IMR-90 (cell line): ENCODE measurements at regions of chr13 and their contacts with region 1.

Region 1: DNA sequence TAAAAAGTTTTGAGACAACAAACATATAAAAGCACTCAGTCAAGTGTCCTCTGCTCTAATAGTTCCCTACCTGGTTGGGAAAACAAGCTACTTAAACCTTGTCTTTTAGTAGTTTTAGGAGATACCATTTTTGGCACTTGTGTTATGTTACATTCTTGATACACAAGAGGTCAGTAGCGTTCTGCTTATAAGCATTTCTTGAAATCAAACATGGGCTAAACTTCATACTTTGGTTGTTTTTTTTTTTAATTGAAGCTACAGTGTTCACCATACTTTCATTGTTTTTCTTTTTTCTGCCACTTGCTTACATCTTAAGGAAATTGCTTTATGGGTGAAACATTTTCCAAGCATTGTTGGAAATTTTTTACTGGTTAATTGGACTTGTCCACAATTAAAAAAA is 12.9 kb downstream of the NHLRC3 start:
- DNase-seq: peak; percentile 50
- ATAC-seq: peak; percentile 75
- H3K4me3 ChIP-seq: no peak overlapping the region
- H3K27ac ChIP-seq: no peak overlapping the region
- H3K4me1 ChIP-seq: no peaks in the 10 kb centered on the region
- H3K27me3 ChIP-seq: no peaks in the 10 kb centered on the region
- CTCF ChIP-seq: peak; percentile 55
- POLR2A ChIP-seq: no peak
- RAD21 ChIP-seq: peak; percentile 60

Region 2: DNA sequence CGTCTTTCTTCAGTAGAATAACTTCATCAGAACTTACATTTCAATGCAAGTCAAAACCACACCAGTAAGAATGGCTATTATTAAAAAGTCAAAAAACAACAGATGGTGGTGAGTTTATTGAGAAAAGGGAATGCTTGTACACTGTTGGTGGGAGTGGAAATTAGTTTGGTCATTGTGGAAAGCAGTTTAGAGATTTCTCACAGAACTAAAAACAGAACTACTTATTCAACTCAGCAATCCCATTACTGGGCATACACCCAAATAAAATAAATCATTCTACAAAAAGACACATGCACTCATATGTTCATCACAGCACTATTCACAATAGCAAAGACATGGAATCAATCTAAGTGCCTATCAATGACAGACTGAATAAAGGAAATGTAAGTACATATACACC is 218.3 kb after region 1 on chr13:
- CTCF ChIA-PET with region 1: no interaction called
- POLR2A ChIA-PET with region 1: no interaction called
- dilution Hi-C with region 1: no loop called
- in situ Hi-C with region 1: no loop called
- intact Hi-C with region 1: loop called (anchors 5 kb)
- DNase-seq: no peak
- ATAC-seq: no peak
- H3K4me3 ChIP-seq: no peak overlapping the region
- H3K27ac ChIP-seq: no peak overlapping the region
- H3K4me1 ChIP-seq: no peaks in the 10 kb centered on the region
- H3K27me3 ChIP-seq: no peaks in the 10 kb centered on the region; the same call in 1 of the 2 replicates
- CTCF ChIP-seq: no peak
- POLR2A ChIP-seq: no peak
- RAD21 ChIP-seq: no peak

Region 3: DNA sequence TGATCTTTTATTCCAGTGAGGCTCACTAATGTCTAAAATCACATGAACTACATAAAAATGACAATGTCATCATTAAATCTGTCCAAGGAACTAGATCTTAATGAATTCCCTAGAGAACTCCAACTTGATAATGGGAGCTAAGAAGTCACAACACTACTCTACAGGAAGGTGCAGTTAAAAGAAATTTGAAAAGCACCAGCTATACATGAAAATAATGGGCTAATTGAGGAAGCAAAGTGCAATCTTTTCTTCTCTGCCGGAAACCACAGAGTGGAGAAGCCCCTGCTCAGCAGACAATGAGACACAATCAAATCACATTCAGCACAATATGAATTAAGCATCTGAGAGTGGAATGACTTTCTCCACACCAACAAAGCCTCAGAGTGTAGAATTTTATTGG is 290.1 kb after region 1 on chr13:
- CTCF ChIA-PET with region 1: no interaction called
- POLR2A ChIA-PET with region 1: no interaction called
- dilution Hi-C with region 1: no loop called
- in situ Hi-C with region 1: no loop called
- intact Hi-C with region 1: no loop called
- DNase-seq: no peak
- ATAC-seq: no peak
- H3K4me3 ChIP-seq: no peak overlapping the region
- H3K27ac ChIP-seq: no peak overlapping the region
- H3K4me1 ChIP-seq: no peaks in the 10 kb centered on the region
- H3K27me3 ChIP-seq: no peaks in the 10 kb centered on the region
- CTCF ChIP-seq: no peak
- POLR2A ChIP-seq: no peak
- RAD21 ChIP-seq: no peak

Region 4: DNA sequence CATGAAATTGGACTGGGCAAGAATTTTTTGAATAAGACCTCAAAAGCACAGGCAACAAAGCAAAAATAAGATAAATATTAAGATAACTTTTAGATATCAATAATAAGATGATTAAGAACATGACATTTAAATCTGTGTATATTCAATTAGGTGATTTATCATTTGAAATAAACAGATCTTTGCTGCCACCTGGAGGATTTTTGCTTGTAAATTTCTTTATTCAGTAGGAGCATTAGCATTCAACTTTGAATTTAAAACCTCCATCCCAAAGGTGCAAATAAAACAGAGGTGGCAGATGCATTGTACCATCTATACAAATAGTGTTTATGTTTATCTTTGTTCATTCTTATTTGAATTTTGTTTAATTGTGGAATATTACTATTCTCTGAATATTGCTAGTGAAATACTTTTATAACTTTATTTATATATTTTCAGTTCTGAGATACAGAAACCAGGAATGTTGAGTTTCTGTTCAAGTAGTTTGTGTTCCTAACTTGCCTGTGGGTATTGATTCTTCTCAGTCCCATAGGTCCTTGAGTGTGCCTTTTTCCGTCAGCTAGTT is 625.2 kb after region 1 on chr13:
- CTCF ChIA-PET with region 1: no interaction called
- POLR2A ChIA-PET with region 1: no interaction called
- dilution Hi-C with region 1: no loop called
- in situ Hi-C with region 1: no loop called
- intact Hi-C with region 1: loop called (anchors 2 kb)
- DNase-seq: peak; percentile 39
- ATAC-seq: no peak; the same call in 1 of the 2 replicates
- H3K4me3 ChIP-seq: no peak overlapping the region
- H3K27ac ChIP-seq: no peak overlapping the region
- H3K4me1 ChIP-seq: no peaks in the 10 kb centered on the region
- H3K27me3 ChIP-seq: no peaks in the 10 kb centered on the region
- CTCF ChIP-seq: peak; percentile 47
- POLR2A ChIP-seq: no peak
- RAD21 ChIP-seq: peak; percentile 32; the same call in 1 of the 2 replicates